Endothelial cell of umbilical vein (primary cell): ENCODE measurements at regions of chr19 and their contacts with region 1.

Region 1: DNA sequence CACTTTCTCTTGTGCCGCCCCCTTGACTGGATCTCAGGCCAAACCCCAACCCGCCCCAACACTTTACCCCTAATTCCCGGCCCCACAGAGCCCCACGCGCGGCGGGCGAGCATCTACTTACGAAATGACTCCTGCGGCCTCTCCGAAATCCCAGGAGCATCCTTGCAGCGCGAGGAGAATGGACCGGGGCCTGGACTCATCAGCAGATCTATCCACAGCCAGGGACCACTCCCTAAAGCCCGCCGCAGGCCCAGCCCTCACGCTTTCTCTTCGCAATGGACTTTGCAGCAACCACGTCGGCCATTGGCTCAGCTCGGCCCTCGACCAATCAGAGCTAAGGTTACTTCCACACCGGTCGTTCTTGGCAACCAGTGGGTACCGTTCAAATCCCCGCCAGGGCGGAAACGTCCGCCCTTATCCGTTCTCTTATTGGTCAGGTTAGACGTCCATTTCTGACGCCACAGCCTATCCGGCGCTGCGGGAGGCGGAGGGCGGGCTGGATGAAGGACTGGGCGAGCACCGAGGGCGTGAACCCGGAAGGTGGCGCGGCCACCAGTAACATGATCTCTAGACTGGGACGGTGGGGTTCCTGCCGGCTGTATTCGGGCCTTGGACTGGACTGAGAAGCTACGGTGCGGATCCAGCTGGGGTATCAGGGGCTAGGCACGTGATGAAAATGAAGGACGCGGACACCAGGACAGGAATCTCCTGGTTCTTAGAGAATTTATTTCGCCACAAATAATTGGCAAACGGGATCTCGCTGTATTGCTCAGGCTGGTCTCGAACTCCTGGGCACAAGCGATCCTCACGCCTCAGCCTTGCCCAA is at the starts of genes CEP89 and FAAP24:
- DNase-seq: peak; percentile 100
- H3K4me3 ChIP-seq: peak within 1 kb of the TSS; percentile 61 to 97 (median 88)
- H3K27ac ChIP-seq: peak within 1 kb of the TSS; percentile 77
- H3K4me1 ChIP-seq: peaks cover 10% of the 10 kb centered on the region
- H3K27me3 ChIP-seq: no peaks in the 10 kb centered on the region
- CTCF ChIP-seq: no peak
- POLR2A ChIP-seq: peak; percentile 84
- total RNA-seq, gene CEP89: 46.2 and 46.4 TPM in 2 replicates
- total RNA-seq, gene FAAP24: 4.4 and 5.5 TPM in 2 replicates

Region 2: DNA sequence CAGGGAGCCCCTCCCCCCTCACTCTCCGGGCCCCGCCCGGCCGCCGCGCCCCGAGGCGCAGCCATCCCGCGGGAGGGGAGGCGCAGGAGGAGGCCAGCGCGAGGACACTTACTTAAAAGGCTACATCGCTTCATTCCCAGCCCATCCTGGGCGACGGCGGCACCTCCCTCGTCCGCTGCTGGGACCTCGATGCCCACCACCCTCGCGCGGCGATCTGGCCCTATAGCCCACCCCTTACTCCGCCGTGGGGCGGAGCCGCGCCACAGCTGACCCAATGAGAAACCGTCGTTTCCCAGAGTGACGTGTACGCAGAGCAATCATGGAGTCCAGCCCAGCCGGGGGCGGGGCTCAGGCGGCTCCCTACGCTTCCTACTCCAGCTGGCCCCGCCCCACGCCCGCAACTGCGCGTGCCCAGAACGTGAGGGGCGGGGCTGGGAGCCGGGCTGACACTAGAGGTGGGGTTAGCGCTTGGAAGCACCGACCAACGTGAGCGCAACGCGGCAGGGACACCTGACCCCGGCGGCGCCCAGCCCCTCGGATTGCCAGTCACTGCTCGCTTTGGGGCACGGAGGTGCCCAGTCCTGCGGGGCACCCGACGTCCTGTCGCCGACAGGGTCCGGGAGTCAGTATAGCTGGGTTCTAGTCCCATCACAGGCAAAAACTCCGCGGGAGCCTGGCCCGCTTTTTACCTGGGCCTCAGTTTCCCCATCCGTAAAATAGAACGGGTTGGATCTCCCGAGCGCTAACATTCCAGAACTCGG is 296.8 kb before region 1 on chr19 and contains the start of gene ANKRD27:
- CTCF ChIA-PET with region 1: no interaction called
- POLR2A ChIA-PET with region 1: no interaction called
- dilution Hi-C with region 1: no loop called
- intact Hi-C with region 1: loop called (anchors 5 kb)
- DNase-seq: peak; percentile 99
- H3K4me3 ChIP-seq: peak within 1 kb of the TSS; percentile 65 to 81 (median 74)
- H3K27ac ChIP-seq: no peak within 1 kb of the TSS
- H3K4me1 ChIP-seq: peaks cover 9% of the 10 kb centered on the region
- H3K27me3 ChIP-seq: peaks cover 16 to 24% of the 10 kb centered on the region in 2 experiments
- CTCF ChIP-seq: no peak
- POLR2A ChIP-seq: peak; percentile 59
- total RNA-seq, gene ANKRD27: 29.6 and 37.4 TPM in 2 replicates

Region 3: DNA sequence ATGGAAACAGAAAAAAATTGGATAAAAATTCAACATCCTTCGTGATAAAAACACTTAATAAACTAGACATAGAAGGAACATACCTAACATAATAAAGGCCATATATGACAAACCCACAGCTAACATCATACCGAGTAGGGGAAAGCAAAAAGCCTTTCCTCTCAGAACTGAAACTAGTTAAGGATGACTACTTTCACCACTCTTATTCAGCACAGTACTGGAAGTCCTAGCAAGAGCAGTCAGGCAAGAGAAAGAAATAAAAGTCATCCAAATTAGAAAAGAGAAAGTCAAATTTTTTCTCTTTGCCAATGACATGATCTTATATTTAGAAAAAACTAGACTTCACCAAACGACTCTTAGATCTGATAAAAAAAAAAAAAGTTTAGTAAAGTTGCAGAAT is 76.5 kb before region 1 on chr19:
- CTCF ChIA-PET with region 1: no interaction called
- POLR2A ChIA-PET with region 1: no interaction called
- dilution Hi-C with region 1: no loop called
- intact Hi-C with region 1: no loop called
- DNase-seq: no peak
- H3K4me3 ChIP-seq: no peak overlapping the region
- H3K27ac ChIP-seq: no peak overlapping the region
- H3K4me1 ChIP-seq: no peaks in the 10 kb centered on the region
- H3K27me3 ChIP-seq: no peaks in the 10 kb centered on the region
- CTCF ChIP-seq: no peak
- POLR2A ChIP-seq: no peak

Region 4: GRCh38 chr19:33110137-33110910 is 138.4 kb after region 1 on chr19:
- CTCF ChIA-PET with region 1: interaction called, 5 read pairs
- POLR2A ChIA-PET with region 1: no interaction called
- dilution Hi-C with region 1: no loop called
- intact Hi-C with region 1: loop called (anchors 2 kb)
- DNase-seq: peak; percentile 24
- H3K4me3 ChIP-seq: no peak overlapping the region
- H3K27ac ChIP-seq: peak overlapping the region; percentile 0
- H3K4me1 ChIP-seq: peaks cover 3% of the 10 kb centered on the region
- H3K27me3 ChIP-seq: no peaks in the 10 kb centered on the region
- CTCF ChIP-seq: no peak
- POLR2A ChIP-seq: no peak

Region 5: GRCh38 chr19:33125929-33126388 is 154.0 kb after region 1 on chr19:
- CTCF ChIA-PET with region 1: interaction called, 37 read pairs
- POLR2A ChIA-PET with region 1: no interaction called
- dilution Hi-C with region 1: no loop called
- intact Hi-C with region 1: no loop called
- DNase-seq: peak; percentile 73
- H3K4me3 ChIP-seq: no peak overlapping the region
- H3K27ac ChIP-seq: no peak overlapping the region
- H3K4me1 ChIP-seq: no peaks in the 10 kb centered on the region
- H3K27me3 ChIP-seq: no peaks in the 10 kb centered on the region
- CTCF ChIP-seq: peak; percentile 83 to 87
- POLR2A ChIP-seq: no peak

Region 6: GRCh38 chr19:33186431-33187182 is 214.7 kb after region 1 on chr19:
- CTCF ChIA-PET with region 1: interaction called, 24 read pairs
- POLR2A ChIA-PET with region 1: no interaction called
- dilution Hi-C with region 1: no loop called
- intact Hi-C with region 1: no loop called
- DNase-seq: no peak
- H3K4me3 ChIP-seq: no peak overlapping the region
- H3K27ac ChIP-seq: no peak overlapping the region
- H3K4me1 ChIP-seq: no peaks in the 10 kb centered on the region
- H3K27me3 ChIP-seq: no peaks in the 10 kb centered on the region
- CTCF ChIP-seq: no peak
- POLR2A ChIP-seq: no peak